HEK293T (cell line): ENCODE measurements at regions of chr6 and their contacts with region 1.

Region 1: GRCh38 chr6:1609648-1610496 is at the start of gene FOXC1:
- DNase-seq: peak; percentile 77

Region 2: DNA sequence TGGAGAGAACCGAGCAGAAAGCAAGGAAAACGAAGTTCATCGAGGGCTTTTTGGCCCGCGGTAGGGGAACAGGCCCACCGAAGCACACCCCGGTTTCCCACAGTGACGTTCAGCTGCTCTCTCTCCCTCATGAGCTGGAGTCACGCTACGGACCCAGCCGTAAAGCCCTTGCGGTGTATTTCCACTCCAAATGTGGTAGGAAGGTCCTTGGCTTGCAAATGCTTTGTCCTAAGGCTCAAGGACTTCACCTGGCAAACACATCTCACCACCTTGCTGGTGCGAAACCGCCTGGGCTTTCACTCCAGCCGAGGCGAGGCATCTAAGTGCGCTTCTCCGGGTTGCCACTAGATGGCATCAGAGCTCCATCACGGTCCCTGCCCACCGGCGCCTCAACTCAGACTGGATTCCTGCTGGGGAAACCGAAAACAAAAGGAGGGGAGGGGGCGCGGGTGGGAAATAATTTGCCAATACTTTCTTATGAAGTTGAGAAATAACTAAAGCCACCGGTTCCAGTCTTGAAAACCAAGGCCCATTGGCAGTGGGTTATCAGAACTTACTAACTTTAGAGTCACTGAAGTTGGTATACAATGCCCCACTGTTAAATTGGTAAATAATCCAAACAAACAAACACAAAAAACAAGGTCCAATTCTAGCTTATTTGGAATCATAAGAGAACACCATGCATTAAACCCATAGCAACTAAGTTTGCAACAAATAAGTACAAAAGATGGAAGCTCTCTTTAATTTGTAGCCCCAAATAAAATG is 13.6 kb before region 1 on chr6:
- CTCF ChIA-PET with region 1: interaction called, 5 read pairs
- POLR2A ChIA-PET with region 1: interaction called, 85 read pairs
- DNase-seq: peak; percentile 73

Region 3: GRCh38 chr6:1665214-1665613 is 55.3 kb after region 1 on chr6:
- CTCF ChIA-PET with region 1: interaction called, 4 read pairs
- POLR2A ChIA-PET with region 1: interaction called, 70 read pairs
- DNase-seq: no peak

Region 4: GRCh38 chr6:1686117-1687098 is 76.5 kb after region 1 on chr6:
- CTCF ChIA-PET with region 1: interaction called, 4 read pairs
- POLR2A ChIA-PET with region 1: interaction called, 20 read pairs
- DNase-seq: no peak

Region 5: GRCh38 chr6:1821513-1822183 is 211.8 kb after region 1 on chr6:
- CTCF ChIA-PET with region 1: no interaction called
- POLR2A ChIA-PET with region 1: interaction called, 19 read pairs
- DNase-seq: no peak

Region 6: DNA sequence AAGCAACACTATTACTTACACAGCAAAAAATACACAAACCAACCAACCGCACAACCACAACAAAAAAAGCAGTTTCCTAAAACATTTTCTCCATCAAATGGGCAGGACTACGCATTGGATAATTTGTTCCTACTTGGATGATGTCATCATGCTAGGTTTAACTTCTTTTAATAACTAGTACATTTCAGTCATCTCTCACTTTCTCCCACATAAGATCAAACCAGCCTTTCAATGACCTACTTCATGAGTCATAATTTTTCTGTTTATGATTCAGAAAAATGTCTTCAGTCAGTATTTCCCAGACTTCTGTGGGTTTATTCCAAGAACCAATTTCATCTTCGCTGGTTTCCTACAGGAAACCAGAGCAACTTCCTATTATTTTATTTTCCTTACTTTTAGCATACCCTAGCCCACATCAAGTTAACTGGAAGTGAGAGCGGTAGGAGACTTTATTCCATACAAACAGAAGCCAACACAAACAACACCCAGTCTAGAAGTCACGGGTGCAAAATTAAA is 501.3 kb after region 1 on chr6:
- CTCF ChIA-PET with region 1: interaction called, 7 read pairs
- POLR2A ChIA-PET with region 1: interaction called, 12 read pairs
- DNase-seq: no peak